Activated CD4-positive, alpha-beta T cell treated with anti-CD3 and anti-CD28 coated beads, Interleukin-2, amount 10 ng/mL, durations not matched to agents 24 days and 14 days (primary cell): ENCODE measurements at regions of chr22 and their contacts with region 1.

Region 1: DNA sequence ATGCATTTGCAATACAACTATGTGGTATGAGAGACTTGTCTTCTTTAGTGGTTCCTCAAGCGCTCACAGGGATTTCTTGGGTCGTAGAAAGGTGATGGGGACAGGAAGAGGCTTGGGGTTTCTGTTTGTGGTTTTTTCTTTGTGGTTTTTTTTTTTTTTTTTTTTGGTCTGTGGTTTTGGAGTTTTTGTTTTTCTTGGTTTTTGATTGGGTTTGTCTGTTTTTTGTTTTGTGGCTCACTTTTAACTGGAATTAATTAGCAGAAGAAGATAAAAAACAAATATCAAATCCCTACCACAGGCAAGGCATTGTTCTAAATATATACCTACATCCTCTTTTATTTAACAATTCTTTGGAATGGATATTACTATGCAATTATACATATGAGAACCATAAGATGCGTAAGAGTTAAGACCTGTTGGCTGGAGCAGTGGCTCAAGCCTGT is 5.5 kb downstream of the TTC28 start:
- DNase-seq: peak; percentile 86
- H3K4me3 Mint-ChIP-seq: peak overlapping the region; percentile 77
- H3K27ac Mint-ChIP-seq: peak overlapping the region; percentile 98
- H3K4me1 Mint-ChIP-seq: peaks cover 27% of the 10 kb centered on the region
- H3K27me3 Mint-ChIP-seq: peaks cover 66% of the 10 kb centered on the region

Region 2: DNA sequence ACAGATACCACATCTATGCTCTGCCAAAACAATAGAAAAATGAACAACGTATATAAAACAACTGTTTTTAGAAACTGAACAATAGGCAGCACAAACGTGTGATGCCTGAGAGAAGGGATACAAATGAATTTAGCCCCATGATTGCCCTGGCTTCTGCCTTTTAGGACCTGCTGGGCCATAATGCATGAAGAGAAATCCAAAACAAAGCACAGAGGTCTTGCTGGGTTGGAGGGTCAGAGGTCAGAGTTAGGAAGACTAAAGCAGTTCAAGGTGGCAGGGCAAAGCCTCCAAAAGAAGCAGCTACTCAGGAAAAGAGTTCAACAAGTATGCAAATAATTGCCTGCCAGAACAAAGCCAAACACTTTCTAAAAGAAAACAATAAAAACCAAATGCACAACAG is 133.0 kb before region 1 on chr22:
- intact Hi-C with region 1: no loop called
- DNase-seq: no peak
- H3K4me3 Mint-ChIP-seq: no peak overlapping the region
- H3K27ac Mint-ChIP-seq: no peak overlapping the region
- H3K4me1 Mint-ChIP-seq: no peaks in the 10 kb centered on the region
- H3K27me3 Mint-ChIP-seq: peaks cover 4% of the 10 kb centered on the region

Region 3: DNA sequence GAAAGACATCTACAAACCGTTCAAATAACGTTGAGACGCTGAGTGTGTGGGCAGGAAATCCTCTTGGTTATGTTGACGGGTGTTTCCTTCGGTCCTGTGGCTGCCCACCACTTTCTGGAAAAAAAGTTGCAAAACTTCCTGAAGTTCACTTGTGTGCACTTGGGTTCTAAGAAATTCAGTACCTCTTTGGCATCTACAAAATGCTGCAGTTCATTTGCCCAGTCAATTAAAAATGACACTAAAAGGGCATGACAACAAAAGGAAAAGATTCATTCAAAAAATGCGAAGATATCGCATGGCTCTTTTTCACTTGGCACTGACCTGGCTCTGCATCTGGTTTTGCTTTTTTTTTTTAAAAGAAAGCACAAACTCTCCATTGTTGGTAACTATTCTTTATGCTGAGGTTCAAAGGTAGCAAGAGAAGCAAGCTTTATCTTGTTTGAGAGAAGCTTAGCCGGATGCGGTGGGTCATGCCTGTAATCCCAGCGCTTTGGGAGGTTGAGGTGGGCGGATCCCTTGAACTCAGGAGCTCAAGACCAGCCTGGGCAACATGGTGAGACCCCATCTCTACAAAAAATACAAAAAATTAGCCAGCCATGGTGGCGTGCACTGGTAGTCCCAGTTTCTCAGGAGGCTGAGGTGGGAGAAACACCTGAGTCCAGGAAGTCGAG is 136.8 kb after region 1 on chr22:
- intact Hi-C with region 1: loop called (anchors 1 kb)
- DNase-seq: peak; percentile 89
- H3K4me3 Mint-ChIP-seq: peak overlapping the region; percentile 73
- H3K27ac Mint-ChIP-seq: peak overlapping the region; percentile 89
- H3K4me1 Mint-ChIP-seq: peaks cover 76% of the 10 kb centered on the region
- H3K27me3 Mint-ChIP-seq: no peaks in the 10 kb centered on the region

Region 4: GRCh38 chr22:28899199-28899853 is 225.2 kb after region 1 on chr22:
- intact Hi-C with region 1: no loop called
- DNase-seq: no peak
- H3K4me3 Mint-ChIP-seq: no peak overlapping the region
- H3K27ac Mint-ChIP-seq: no peak overlapping the region
- H3K4me1 Mint-ChIP-seq: peaks cover 5% of the 10 kb centered on the region
- H3K27me3 Mint-ChIP-seq: peaks cover 57% of the 10 kb centered on the region

Region 5: DNA sequence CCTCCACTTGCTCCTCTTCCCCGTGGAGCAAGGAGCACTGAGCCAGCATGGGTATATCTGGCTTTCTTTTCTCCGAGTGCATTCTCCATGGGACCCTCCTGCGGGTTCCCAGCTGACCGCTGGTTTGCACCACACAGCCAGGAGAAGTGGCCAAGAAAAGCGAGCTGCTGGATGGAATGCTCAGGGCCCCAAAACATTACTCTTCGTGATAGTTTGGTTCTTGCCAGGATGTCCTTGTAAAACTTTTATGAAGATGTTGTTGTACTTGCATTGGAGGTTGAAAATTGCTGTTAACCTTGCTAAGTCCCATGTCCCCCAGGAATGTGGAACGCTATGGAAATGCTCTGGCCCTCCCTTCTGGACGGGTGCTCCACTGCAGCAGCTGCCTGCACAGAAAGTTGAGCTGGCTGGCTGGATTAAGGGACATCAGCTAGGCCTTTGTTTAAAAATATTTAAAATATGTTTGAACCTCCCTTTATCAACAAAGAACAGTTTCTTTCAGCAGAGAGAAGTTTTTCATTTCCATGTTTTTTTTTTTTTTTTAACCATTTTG is 277.9 kb after region 1 on chr22:
- intact Hi-C with region 1: loop called (anchors 10 kb)
- DNase-seq: no peak
- H3K4me3 Mint-ChIP-seq: no peak overlapping the region
- H3K27ac Mint-ChIP-seq: no peak overlapping the region
- H3K4me1 Mint-ChIP-seq: peaks cover 12% of the 10 kb centered on the region
- H3K27me3 Mint-ChIP-seq: peaks cover 76% of the 10 kb centered on the region